CD8-positive, alpha-beta T cell (primary cell): ENCODE measurements at regions of chr14 and their contacts with region 1.

Region 1: DNA sequence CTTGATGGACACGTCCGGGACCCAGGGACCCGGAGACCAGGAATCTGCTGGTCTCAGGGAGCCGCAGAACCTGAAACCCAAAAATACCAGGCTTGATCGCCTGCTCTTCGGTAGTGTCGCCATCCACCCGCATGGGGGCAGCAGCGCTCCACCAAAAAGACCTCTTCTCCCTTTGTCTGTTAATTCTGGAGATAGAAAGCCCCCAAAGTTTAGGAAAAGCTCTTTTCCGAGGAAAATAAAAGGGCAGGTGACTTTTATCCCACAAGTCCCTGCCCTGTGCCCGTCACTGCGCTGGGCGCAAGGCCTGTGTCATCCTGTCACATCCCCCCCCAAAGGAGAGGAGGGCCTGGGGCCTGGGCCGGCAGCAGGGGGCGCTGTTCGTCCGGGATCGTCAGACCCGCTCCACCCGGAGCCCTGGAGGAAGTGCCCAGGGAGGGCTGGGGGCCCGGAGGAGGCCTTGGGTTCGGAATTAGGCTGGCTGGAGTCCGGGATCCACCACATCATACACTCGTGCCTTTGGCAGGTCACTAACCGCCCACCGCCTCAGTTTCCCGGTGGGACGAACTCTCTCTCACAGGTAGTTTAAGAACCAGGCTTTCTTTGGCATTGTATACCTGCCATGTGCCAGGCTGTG is 31.9 kb downstream of the DAD1 start:
- DNase-seq: peak; percentile 79 to 98 (median 93)
- ATAC-seq: peak; percentile 17
- H3K4me3 ChIP-seq: peak overlapping the region; percentile 46 to 60
- H3K4me3 Mint-ChIP-seq: peak overlapping the region; percentile 81
- H3K27ac ChIP-seq: peak overlapping the region; percentile 86 to 97
- H3K27ac Mint-ChIP-seq: peak overlapping the region; percentile 98
- H3K4me1 ChIP-seq: peaks cover 86% of the 10 kb centered on the region
- H3K4me1 Mint-ChIP-seq: peaks cover 91% of the 10 kb centered on the region
- H3K27me3 ChIP-seq: no peaks in the 10 kb centered on the region
- H3K27me3 Mint-ChIP-seq: no peaks in the 10 kb centered on the region
- CTCF ChIP-seq: peak; percentile 100

Region 2: DNA sequence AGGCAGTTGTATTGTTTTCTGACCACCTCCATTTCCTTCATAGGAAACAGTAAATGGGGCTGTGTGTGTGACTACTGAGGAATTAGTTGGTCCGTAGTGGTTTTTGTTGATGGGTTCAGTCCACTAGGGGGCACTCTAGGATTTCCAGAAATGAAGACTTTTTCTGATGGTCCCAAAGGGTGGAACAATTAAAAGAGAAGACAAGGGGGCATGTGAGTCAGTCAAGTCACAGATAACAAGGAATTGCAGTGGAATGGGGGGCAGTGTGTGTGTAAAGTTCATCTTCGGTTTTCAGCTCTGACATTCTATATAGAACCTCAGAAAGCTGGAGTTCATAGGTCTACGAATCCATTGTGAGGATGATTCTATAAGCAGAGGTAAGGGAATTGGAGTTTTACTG is 696.9 kb before region 1 on chr14:
- CTCF ChIA-PET with region 1: interaction called, 3 read pairs
- POLR2A ChIA-PET with region 1: no interaction called
- intact Hi-C with region 1: loop called (anchors 2 kb)
- DNase-seq: peak in 4 of 9 experiments; percentile 33 to 73 (median 56)
- ATAC-seq: peak; percentile 60
- H3K4me3 ChIP-seq: no peak overlapping the region
- H3K4me3 Mint-ChIP-seq: peak overlapping the region; percentile 48
- H3K27ac ChIP-seq: no peak overlapping the region
- H3K27ac Mint-ChIP-seq: peak overlapping the region; percentile 67
- H3K4me1 ChIP-seq: no peaks in the 10 kb centered on the region
- H3K4me1 Mint-ChIP-seq: peaks cover 12% of the 10 kb centered on the region
- H3K27me3 ChIP-seq: no peaks in the 10 kb centered on the region
- H3K27me3 Mint-ChIP-seq: peaks cover 2% of the 10 kb centered on the region
- CTCF ChIP-seq: no peak

Region 3: GRCh38 chr14:21997300-21997699 is 559.8 kb before region 1 on chr14:
- CTCF ChIA-PET with region 1: interaction called, 24 read pairs
- POLR2A ChIA-PET with region 1: interaction called, 10 read pairs
- intact Hi-C with region 1: loop called (anchors 5 kb)
- DNase-seq: peak in 5 of 9 experiments; percentile 24 to 77 (median 52)
- ATAC-seq: peak; percentile 91
- H3K4me3 ChIP-seq: peak overlapping the region; percentile 46 to 48
- H3K4me3 Mint-ChIP-seq: peak overlapping the region; percentile 86
- H3K27ac ChIP-seq: peak overlapping the region; percentile 24 to 36
- H3K27ac Mint-ChIP-seq: peak overlapping the region; percentile 95
- H3K4me1 ChIP-seq: peaks cover 7% of the 10 kb centered on the region
- H3K4me1 Mint-ChIP-seq: peaks cover 24% of the 10 kb centered on the region
- H3K27me3 ChIP-seq: no peaks in the 10 kb centered on the region
- H3K27me3 Mint-ChIP-seq: no peaks in the 10 kb centered on the region
- CTCF ChIP-seq: peak; percentile 27

Region 4: DNA sequence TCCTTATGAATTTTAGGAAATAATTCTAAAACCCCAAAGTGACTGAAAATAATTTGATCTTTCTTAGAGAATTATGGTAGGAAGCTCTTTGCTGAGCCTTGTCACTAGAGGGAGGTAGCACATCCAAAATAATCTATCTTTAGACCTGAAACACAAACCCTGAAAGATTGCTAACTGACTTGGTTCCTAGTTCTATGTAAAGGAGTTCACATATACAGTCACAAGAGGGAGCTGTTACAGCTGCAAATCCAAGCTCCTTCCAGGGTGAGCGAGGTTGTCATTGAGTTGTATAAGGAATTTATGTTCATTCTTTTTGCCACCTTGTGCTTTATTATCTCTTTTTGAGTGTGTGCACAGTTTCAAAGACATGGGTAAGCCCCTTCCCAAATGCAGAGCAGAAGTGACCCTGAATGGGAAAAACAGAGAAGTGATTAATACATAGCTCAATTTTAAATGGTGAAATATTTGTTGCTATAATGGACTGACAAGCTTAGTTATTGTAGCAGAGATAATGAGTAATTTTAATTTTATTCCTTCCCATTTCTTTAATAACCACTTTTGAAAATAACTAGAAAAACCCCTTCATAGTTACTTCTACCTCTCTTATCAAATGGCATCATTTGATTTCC is 356.0 kb before region 1 on chr14:
- CTCF ChIA-PET with region 1: interaction called, 8 read pairs
- POLR2A ChIA-PET with region 1: no interaction called
- intact Hi-C with region 1: loop called in 1 of 2 experiments (anchors 5 kb)
- DNase-seq: peak in 2 of 9 experiments; percentile 44 to 70
- ATAC-seq: peak; percentile 71
- H3K4me3 ChIP-seq: no peak overlapping the region
- H3K4me3 Mint-ChIP-seq: no peak overlapping the region
- H3K27ac ChIP-seq: no peak overlapping the region
- H3K27ac Mint-ChIP-seq: no peak overlapping the region
- H3K4me1 ChIP-seq: no peaks in the 10 kb centered on the region
- H3K4me1 Mint-ChIP-seq: peaks cover 10% of the 10 kb centered on the region
- H3K27me3 ChIP-seq: no peaks in the 10 kb centered on the region
- H3K27me3 Mint-ChIP-seq: no peaks in the 10 kb centered on the region
- CTCF ChIP-seq: no peak

Region 5: GRCh38 chr14:22513066-22513812 is 43.9 kb before region 1 on chr14:
- CTCF ChIA-PET with region 1: interaction called, 30 read pairs
- POLR2A ChIA-PET with region 1: interaction called, 472 read pairs
- intact Hi-C with region 1: loop called in 1 of 2 experiments (anchors 5 kb)
- DNase-seq: no peak
- ATAC-seq: no peak
- H3K4me3 ChIP-seq: peak overlapping the region; percentile 41 to 53
- H3K4me3 Mint-ChIP-seq: peak overlapping the region; percentile 81
- H3K27ac ChIP-seq: peak overlapping the region; percentile 43 to 82
- H3K27ac Mint-ChIP-seq: peak overlapping the region; percentile 99
- H3K4me1 ChIP-seq: peaks cover 95% of the 10 kb centered on the region
- H3K4me1 Mint-ChIP-seq: peaks cover 89% of the 10 kb centered on the region
- H3K27me3 ChIP-seq: no peaks in the 10 kb centered on the region
- H3K27me3 Mint-ChIP-seq: no peaks in the 10 kb centered on the region
- CTCF ChIP-seq: no peak

Region 6: DNA sequence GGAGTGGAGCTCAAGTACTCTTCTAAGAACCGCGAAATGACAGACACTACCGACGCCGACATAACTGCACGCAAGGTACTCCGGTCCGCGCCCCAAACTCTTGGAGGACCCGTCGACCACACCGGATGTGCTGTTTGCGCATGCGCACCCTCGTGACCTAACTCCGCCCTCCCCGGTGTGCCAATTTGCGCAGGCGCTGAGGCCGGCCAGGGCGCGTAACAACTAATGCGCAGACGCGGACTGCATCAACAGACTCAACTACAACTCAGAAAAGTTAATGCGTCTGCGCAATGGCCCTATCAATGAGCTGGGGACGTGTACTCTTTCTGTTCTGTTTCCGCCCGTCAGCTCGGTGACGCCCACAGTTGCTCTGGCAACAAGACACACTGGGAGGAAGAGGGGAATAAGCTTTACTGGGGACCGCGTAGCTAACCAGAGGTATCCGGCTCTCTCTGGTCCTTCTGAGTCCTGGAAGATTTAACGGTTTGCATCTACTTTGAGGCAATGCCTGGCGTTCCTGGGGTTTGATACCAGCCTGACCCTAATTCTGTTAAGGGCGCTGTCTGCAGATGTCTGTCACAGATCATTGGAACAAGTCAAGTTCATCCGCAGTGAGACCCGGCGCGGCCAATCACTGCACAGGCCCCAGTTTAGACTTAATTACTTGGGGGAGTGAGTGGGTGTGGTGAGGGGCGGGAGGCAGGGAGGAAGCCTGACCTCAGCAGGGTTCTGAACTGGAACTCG is 32.2 kb after region 1 on chr14 and contains the start of gene DAD1:
- CTCF ChIA-PET with region 1: interaction called, 18 read pairs
- POLR2A ChIA-PET with region 1: interaction called, 23 read pairs
- intact Hi-C with region 1: loop called (anchors 1 kb)
- DNase-seq: peak; percentile 99 to 100 (median 100)
- ATAC-seq: peak; percentile 86
- H3K4me3 ChIP-seq: peak within 1 kb of the TSS; percentile 64 to 67
- H3K4me3 Mint-ChIP-seq: peak within 1 kb of the TSS; percentile 98
- H3K27ac ChIP-seq: peak within 1 kb of the TSS; percentile 95 to 99
- H3K27ac Mint-ChIP-seq: peak within 1 kb of the TSS; percentile 100
- H3K4me1 ChIP-seq: peaks cover 47% of the 10 kb centered on the region
- H3K4me1 Mint-ChIP-seq: peaks cover 49% of the 10 kb centered on the region
- H3K27me3 ChIP-seq: no peaks in the 10 kb centered on the region
- H3K27me3 Mint-ChIP-seq: no peaks in the 10 kb centered on the region
- CTCF ChIP-seq: no peak
- total RNA-seq, gene DAD1: 27.2 to 35.6 TPM

Region 7: GRCh38 chr14:22986508-22987054 is 429.5 kb after region 1 on chr14:
- CTCF ChIA-PET with region 1: interaction called, 8 read pairs
- POLR2A ChIA-PET with region 1: interaction called, 3 read pairs
- intact Hi-C with region 1: loop called (anchors 1 to 5 kb)
- DNase-seq: peak; percentile 77 to 93 (median 89)
- ATAC-seq: peak; percentile 69
- H3K4me3 ChIP-seq: no peak overlapping the region
- H3K4me3 Mint-ChIP-seq: no peak overlapping the region
- H3K27ac ChIP-seq: no peak overlapping the region
- H3K27ac Mint-ChIP-seq: no peak overlapping the region
- H3K4me1 ChIP-seq: peaks cover 7% of the 10 kb centered on the region
- H3K4me1 Mint-ChIP-seq: no peaks in the 10 kb centered on the region
- H3K27me3 ChIP-seq: peaks cover 0 to 6% of the 10 kb centered on the region in 2 experiments
- H3K27me3 Mint-ChIP-seq: no peaks in the 10 kb centered on the region
- CTCF ChIP-seq: peak; percentile 96

Region 8: GRCh38 chr14:23104591-23105347 is 547.7 kb after region 1 on chr14 and contains the start of gene CIROP:
- CTCF ChIA-PET with region 1: no interaction called
- POLR2A ChIA-PET with region 1: no interaction called
- intact Hi-C with region 1: no loop called
- DNase-seq: no peak
- ATAC-seq: no peak
- H3K4me3 ChIP-seq: no peak within 1 kb of the TSS
- H3K4me3 Mint-ChIP-seq: no peak within 1 kb of the TSS
- H3K27ac ChIP-seq: no peak within 1 kb of the TSS
- H3K27ac Mint-ChIP-seq: no peak within 1 kb of the TSS
- H3K4me1 ChIP-seq: no peaks in the 10 kb centered on the region
- H3K4me1 Mint-ChIP-seq: peaks cover 3% of the 10 kb centered on the region
- H3K27me3 ChIP-seq: peaks cover 0 to 3% of the 10 kb centered on the region in 2 experiments
- H3K27me3 Mint-ChIP-seq: peaks cover 2% of the 10 kb centered on the region
- CTCF ChIP-seq: no peak
- total RNA-seq, gene CIROP: not detected